ENCODE measurements at regions of chr2 and their contacts with region 1.

Region 1: GRCh38 chr2:199833525-199833924 is 17.5 kb downstream of the FTCDNL1 start:
- DNase-seq: no peak
- H3K4me3 ChIP-seq: no peak overlapping the region
- H3K27ac ChIP-seq: no peak overlapping the region
- H3K4me1 ChIP-seq: peaks cover 0 to 8% (median under 1%) of the 10 kb centered on the region in 4 experiments; a peak in 3 of 7 replicates
- H3K27me3 ChIP-seq: no peaks in the 10 kb centered on the region
- CTCF ChIP-seq: no peak
- EP300 ChIP-seq: no peak
- POLR2A ChIP-seq: no peak
- RAD21 ChIP-seq: no peak

Region 2: GRCh38 chr2:199677881-199678280 is 155.6 kb before region 1 on chr2:
- CTCF ChIA-PET with region 1: no interaction called
- POLR2A ChIA-PET with region 1: no interaction called
- DNase-seq: no peak
- H3K4me3 ChIP-seq: no peak overlapping the region
- H3K27ac ChIP-seq: no peak overlapping the region
- H3K4me1 ChIP-seq: no peaks in the 10 kb centered on the region
- H3K27me3 ChIP-seq: no peaks in the 10 kb centered on the region
- CTCF ChIP-seq: no peak
- EP300 ChIP-seq: no peak
- POLR2A ChIP-seq: no peak
- RAD21 ChIP-seq: no peak

Region 3: GRCh38 chr2:199757233-199757870 is 76.2 kb before region 1 on chr2:
- CTCF ChIA-PET with region 1: no interaction called
- POLR2A ChIA-PET with region 1: no interaction called
- DNase-seq: no peak
- H3K4me3 ChIP-seq: no peak overlapping the region
- H3K27ac ChIP-seq: no peak overlapping the region
- H3K4me1 ChIP-seq: no peaks in the 10 kb centered on the region; a peak in 1 of 7 replicates
- H3K27me3 ChIP-seq: peaks cover 0 to 2% (median 0%) of the 10 kb centered on the region in 4 experiments; a peak in 1 of 7 replicates
- CTCF ChIP-seq: no peak
- EP300 ChIP-seq: no peak
- POLR2A ChIP-seq: no peak
- RAD21 ChIP-seq: no peak

Region 4: DNA sequence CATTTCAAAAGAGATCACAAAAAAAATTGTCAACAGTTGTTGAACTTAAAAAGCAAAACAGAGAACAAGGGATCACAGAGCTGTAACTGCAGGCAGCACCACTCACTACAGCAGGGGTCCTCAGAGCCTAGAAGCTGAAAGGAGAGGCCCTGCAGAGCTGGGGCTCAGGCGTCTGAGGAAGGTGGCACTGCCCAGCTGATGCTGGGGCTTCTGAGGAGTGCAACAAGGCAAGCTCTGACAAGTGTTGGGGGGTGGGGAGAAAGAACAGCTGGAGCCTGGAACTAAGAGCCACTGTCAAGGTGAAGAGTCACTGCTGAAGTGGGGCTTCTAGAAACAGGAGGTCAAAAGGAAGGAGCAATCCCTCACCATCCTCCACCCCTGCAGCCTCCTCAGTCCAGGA is 28.7 kb before region 1 on chr2:
- CTCF ChIA-PET with region 1: no interaction called
- POLR2A ChIA-PET with region 1: no interaction called
- DNase-seq: no peak
- H3K4me3 ChIP-seq: no peak overlapping the region
- H3K27ac ChIP-seq: no peak overlapping the region
- H3K4me1 ChIP-seq: peaks cover 0 to 7% (median 2%) of the 10 kb centered on the region in 4 experiments; a peak in 5 of 7 replicates
- H3K27me3 ChIP-seq: no peaks in the 10 kb centered on the region; a peak in 1 of 7 replicates
- CTCF ChIP-seq: no peak
- EP300 ChIP-seq: no peak
- POLR2A ChIP-seq: no peak
- RAD21 ChIP-seq: peak in 1 of 2 experiments; percentile 20; a peak in 1 of 4 replicates

Region 5: DNA sequence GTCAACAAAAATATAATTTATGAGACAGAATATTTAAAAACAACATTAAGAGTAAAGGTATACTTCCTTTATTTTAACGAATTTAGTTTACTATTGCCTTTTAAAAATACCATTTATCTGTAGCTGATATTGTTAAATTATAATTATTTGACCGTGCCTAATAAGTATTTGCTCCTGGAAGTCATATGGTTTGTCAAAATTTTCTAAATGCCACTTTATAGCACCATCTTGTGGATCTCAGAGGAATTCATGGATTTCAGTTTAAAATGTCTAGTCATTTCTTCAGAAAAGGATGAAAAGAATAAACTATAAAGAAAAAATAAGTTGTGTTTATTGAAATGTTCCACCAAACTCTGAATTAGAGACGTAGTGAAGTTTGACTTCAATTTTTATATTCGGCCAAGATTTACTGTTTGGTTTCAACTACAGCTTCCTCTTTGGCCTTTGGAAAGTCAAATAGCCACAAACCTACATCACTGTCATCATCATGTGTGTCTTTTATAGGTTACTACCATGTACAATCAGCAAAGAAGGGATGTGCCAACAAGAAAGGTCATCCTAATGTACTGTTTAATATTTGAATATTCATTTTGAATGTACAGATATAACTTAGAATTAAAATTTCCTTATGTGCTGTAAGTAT is 27.7 kb after region 1 on chr2:
- CTCF ChIA-PET with region 1: interaction called, 13 read pairs
- POLR2A ChIA-PET with region 1: no interaction called
- DNase-seq: no peak
- H3K4me3 ChIP-seq: no peak overlapping the region
- H3K27ac ChIP-seq: no peak overlapping the region
- H3K4me1 ChIP-seq: peaks cover 0 to 2% (median 0%) of the 10 kb centered on the region in 4 experiments; a peak in 1 of 7 replicates
- H3K27me3 ChIP-seq: no peaks in the 10 kb centered on the region
- CTCF ChIP-seq: peak in 2 of 3 experiments; percentile 36 to 40; a peak in 2 of 4 replicates
- EP300 ChIP-seq: no peak
- POLR2A ChIP-seq: no peak
- RAD21 ChIP-seq: peak; percentile 65 to 80

Region 6: DNA sequence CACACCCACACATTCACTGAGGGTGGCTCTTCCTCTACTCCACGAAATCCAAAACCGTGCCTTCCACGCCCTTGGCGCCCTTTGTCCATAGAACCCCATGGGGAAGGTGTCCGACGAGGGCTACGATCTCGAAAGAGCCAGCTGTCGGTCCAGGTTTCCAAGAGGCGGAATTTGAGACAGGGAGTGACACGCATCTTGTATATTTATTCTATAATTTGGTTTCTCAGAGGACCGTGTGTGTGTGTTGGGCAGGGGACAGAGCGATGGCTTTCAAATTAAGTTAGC is 78.3 kb after region 1 on chr2:
- CTCF ChIA-PET with region 1: no interaction called
- POLR2A ChIA-PET with region 1: no interaction called
- DNase-seq: no peak
- H3K4me3 ChIP-seq: peak overlapping the region; percentile 88 to 97 (median 92)
- H3K27ac ChIP-seq: peak overlapping the region; percentile 94
- H3K4me1 ChIP-seq: peaks cover 0 to 3% (median 0%) of the 10 kb centered on the region in 4 experiments; a peak in 2 of 7 replicates
- H3K27me3 ChIP-seq: no peaks in the 10 kb centered on the region
- CTCF ChIP-seq: no peak
- EP300 ChIP-seq: no peak
- POLR2A ChIP-seq: no peak
- RAD21 ChIP-seq: no peak

Measured in H1 (cell line).